Mammary epithelial cell (primary cell): ENCODE measurements at regions of chrX and their contacts with region 1.

Region 1: DNA sequence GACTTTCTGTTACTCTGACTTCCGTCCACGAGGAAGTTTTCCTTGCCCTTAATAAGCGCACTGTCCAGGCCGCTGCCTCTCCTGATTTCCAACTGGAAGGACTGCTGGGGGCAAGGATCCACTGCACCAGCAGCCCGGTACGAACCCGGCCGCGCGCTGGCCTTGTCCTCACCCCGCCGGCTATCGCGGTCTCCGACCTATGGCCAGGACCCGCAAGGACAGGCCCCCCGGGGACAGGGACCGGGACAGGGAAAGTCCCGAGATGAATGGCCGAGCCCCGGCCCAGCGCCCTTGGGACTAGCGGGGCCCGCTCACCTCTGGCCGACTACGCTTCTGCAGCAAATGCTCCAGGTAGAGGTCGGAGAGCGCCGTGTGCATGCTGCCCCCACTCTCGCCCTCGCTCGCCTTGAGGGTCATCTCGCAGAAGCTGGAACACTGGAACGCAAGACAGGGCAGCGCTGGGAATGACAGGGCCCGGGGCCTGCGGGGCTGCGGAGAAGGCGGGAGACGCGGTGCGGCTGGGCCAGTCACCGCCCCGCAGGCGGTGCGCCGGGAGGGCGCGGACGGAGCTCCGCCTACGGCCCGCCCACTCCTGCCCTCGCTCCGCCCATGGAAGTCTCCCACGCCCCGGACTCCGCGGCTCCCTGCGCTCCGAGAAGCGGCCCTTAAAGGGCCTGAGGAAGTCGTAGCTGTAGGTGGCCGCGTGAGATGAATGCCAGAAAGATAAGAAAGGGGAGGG is at the start of gene MPP1:
- DNase-seq: peak; percentile 69
- H3K4me3 ChIP-seq: peak within 1 kb of the TSS; percentile 36 to 71 (median 55)
- H3K27ac ChIP-seq: no peak within 1 kb of the TSS
- H3K4me1 ChIP-seq: peaks cover 12% of the 10 kb centered on the region
- H3K27me3 ChIP-seq: no peaks in the 10 kb centered on the region
- CTCF ChIP-seq: no peak
- total RNA-seq, gene MPP1: 8.2 to 9.7 TPM

Region 2: DNA sequence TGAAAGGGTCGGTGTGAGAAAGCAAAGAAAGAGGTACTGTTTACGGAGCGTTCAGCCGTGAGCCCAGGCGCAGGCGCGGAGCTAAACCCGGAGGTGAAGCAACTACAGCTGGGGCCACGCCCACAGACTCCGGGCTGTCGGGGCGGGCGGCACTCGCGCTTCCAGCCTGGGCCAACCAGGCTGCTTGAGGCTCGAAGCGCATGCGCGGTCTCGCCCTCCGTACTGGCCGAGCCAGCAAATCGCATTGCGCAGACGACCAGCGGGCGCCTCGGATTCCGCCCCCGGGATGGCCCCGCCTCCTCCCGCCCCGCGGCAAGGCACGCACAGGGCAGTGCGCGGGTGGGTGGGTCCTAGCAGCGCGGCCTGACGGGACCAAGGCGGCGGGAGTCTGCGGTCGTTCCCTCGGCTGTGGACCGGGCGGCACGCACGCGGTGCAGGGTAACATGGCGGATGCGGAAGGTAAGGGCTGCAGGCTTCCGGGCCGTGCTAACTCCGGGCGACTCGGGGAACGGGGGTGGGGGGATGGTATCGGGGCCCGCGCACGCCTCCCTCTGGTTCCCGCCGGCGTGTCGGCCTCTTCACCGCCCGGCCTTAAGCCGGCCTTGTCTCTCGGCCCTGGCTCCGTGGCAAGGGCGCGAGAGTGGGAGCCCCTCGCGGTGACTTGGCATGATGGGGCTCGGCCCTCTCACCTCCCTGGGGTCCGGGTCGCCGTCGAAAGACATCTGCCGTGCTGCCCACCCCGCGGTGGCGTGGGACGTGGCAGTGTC is 42.4 kb before region 1 on chrX and contains the start of gene DKC1:
- CTCF ChIA-PET with region 1: no interaction called
- dilution Hi-C with region 1: no loop called
- in situ Hi-C with region 1: no loop called
- intact Hi-C with region 1: loop called (anchors 1 kb)
- DNase-seq: peak; percentile 92
- H3K4me3 ChIP-seq: peak within 1 kb of the TSS; percentile 58 to 81 (median 78)
- H3K27ac ChIP-seq: peak within 1 kb of the TSS; percentile 64
- H3K4me1 ChIP-seq: peaks cover 13% of the 10 kb centered on the region
- H3K27me3 ChIP-seq: no peaks in the 10 kb centered on the region
- CTCF ChIP-seq: peak in 1 of 2 donors; percentile 18
- total RNA-seq, gene DKC1: 31.3 to 93.0 TPM

Region 3: DNA sequence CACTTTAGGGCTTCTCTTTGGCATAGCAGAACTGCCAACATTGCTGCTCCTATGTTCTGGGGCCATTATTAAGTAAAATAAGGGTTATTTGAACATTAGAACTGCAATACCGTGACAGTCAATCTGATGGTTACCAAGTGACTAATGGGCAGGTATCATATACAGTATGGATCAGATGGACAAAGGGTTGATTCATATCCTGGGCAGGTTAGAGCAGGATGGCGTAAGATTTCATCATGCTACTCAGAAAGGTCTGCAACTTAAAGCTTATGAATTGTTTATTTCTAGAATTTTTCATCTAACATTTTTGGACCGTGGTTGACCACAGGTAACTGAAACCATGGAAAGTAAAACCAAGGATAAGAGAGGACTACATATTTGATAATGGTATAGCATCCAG is 307.0 kb after region 1 on chrX:
- CTCF ChIA-PET with region 1: no interaction called
- dilution Hi-C with region 1: no loop called
- in situ Hi-C with region 1: no loop called
- intact Hi-C with region 1: no loop called
- DNase-seq: peak; percentile 82
- H3K4me3 ChIP-seq: no peak overlapping the region
- H3K27ac ChIP-seq: peak overlapping the region; percentile 94
- H3K4me1 ChIP-seq: no peaks in the 10 kb centered on the region
- H3K27me3 ChIP-seq: no peaks in the 10 kb centered on the region
- CTCF ChIP-seq: no peak